Activated CD8-positive, alpha-beta T cell treated with anti-CD3 and anti-CD28 coated beads, Interleukin-2, amount 10 ng/mL, durations not matched to agents 7 days and 5 days (primary cell): ENCODE measurements at regions of chr9 and their contacts with region 1.

Region 1: GRCh38 chr9:128341435-128341849 is 1.1 kb downstream of the SLC27A4 start:
- DNase-seq: peak; percentile 87
- ATAC-seq: peak; percentile 70
- H3K4me3 Mint-ChIP-seq: peak overlapping the region; percentile 95
- H3K27ac Mint-ChIP-seq: peak overlapping the region; percentile 92
- H3K4me1 Mint-ChIP-seq: peaks cover 11% of the 10 kb centered on the region
- H3K27me3 Mint-ChIP-seq: no peaks in the 10 kb centered on the region

Region 2: DNA sequence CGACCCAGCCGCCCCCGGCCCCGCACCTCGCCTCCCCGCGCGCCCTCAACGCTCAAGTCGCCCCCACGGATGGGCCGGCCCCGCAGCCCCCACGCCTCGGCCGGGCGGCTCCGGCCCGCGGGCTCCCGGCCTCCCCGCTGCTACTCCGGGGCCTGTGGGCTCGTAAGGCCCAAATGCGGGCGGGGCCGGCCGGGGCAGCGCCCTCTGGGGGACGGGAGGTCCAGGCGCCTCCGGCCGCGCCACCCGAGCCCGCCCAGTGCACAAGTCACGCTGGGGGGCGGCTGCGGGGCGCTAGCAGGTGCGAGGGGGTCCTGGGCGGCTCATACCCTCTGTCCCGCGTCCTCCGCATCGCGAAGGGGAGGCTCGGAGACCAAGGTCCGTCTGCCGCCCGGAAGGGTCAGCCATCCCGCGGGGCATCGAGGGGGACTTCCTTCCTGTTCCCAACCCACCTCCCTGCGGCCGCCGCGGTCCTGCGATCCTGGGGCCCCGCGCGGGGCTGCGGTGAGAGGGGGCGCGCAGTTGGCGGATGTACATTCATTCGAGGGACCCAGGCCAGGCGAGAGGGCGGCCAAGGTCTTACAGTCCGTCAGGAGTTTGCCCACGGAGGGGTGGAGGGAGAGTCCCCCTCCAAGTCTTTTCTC is 149.9 kb before region 1 on chr9 and contains the start of gene CIZ1:
- CTCF ChIA-PET with region 1: interaction called, 12 read pairs
- POLR2A ChIA-PET with region 1: interaction called, 3 read pairs
- DNase-seq: peak; percentile 78
- ATAC-seq: peak; percentile 89
- H3K4me3 Mint-ChIP-seq: peak within 1 kb of the TSS; percentile 94
- H3K27ac Mint-ChIP-seq: peak within 1 kb of the TSS; percentile 92
- H3K4me1 Mint-ChIP-seq: peaks cover 48% of the 10 kb centered on the region
- H3K27me3 Mint-ChIP-seq: no peaks in the 10 kb centered on the region
- total RNA-seq, gene CIZ1: 121 to 127 TPM

Region 3: DNA sequence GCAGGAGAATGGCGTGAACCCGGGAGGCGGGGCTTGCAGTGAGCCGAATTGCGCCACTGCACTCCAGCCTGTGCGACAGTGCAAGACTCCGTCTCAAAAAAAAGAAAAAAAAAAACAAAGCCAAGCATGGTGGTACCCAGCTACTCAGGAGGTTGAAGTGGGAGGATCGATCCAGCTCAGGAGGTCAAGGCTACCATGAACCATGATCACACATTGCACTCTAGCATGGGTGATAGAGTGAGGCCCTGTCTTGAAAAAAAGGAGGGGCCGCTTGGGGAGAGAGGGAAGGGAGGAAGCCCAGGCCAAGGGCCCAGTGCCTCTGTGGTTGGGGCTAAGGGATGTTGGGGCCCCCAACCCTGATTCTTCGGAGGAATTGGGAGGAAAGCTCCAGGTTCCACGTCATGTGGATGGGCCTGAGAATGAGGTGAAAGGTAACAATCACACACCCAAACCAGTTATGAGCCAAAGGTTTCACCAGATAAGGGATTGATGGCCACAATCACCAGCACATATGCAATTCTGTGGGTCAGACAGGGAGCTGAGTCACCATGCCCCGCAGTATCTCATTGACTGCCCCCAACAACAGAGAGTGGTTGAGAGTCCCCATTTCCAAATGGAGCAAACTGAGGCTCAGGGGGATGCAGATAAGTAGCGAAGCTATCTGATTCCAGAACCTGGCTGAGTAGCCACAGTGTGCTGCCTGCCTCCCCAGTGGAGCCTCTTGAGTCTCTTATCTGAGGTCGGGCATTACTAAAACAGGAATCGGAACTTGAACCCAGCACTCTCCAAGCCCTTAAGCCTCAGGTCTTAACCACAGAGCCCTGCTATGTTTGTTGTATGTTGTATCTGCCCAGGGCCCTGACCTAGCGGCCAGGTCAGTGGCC is 44.9 kb before region 1 on chr9:
- CTCF ChIA-PET with region 1: interaction called, 17 read pairs
- POLR2A ChIA-PET with region 1: interaction called, 3 read pairs
- DNase-seq: no peak
- ATAC-seq: no peak
- H3K4me3 Mint-ChIP-seq: no peak overlapping the region
- H3K27ac Mint-ChIP-seq: no peak overlapping the region
- H3K4me1 Mint-ChIP-seq: peaks cover 4% of the 10 kb centered on the region
- H3K27me3 Mint-ChIP-seq: no peaks in the 10 kb centered on the region

Region 4: GRCh38 chr9:128323212-128323730 is 18.2 kb before region 1 on chr9:
- CTCF ChIA-PET with region 1: interaction called, 15 read pairs
- POLR2A ChIA-PET with region 1: interaction called, 5 read pairs
- DNase-seq: no peak
- ATAC-seq: peak; percentile 3
- H3K4me3 Mint-ChIP-seq: peak overlapping the region; percentile 97
- H3K27ac Mint-ChIP-seq: peak overlapping the region; percentile 99
- H3K4me1 Mint-ChIP-seq: peaks cover 18% of the 10 kb centered on the region
- H3K27me3 Mint-ChIP-seq: no peaks in the 10 kb centered on the region

Region 5: GRCh38 chr9:128399861-128400260 is 58.4 kb after region 1 on chr9:
- CTCF ChIA-PET with region 1: no interaction called
- POLR2A ChIA-PET with region 1: no interaction called
- DNase-seq: no peak
- ATAC-seq: no peak
- H3K4me3 Mint-ChIP-seq: no peak overlapping the region
- H3K27ac Mint-ChIP-seq: no peak overlapping the region
- H3K4me1 Mint-ChIP-seq: peaks cover 3% of the 10 kb centered on the region
- H3K27me3 Mint-ChIP-seq: peaks cover 12% of the 10 kb centered on the region

Region 6: DNA sequence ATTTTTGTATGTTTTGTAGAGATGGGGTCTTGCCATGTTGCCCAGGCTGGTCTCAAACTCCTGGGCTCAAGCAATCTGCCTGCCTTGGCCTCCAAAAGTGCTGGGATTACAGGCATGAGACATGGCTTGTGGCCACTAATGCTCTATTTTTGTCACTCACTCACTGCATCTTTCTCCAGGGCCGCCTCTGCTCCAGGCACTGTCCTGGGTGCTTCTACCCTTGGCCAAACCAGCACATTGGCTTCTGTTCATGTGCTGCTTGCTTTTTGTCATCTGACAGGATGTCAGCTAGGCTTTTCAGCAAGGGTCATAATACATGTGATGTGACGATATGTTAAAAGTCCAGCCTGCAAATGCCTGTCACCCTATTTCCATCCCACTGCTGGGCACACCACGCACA is 117.6 kb after region 1 on chr9:
- CTCF ChIA-PET with region 1: no interaction called
- POLR2A ChIA-PET with region 1: no interaction called
- DNase-seq: no peak
- ATAC-seq: no peak
- H3K4me3 Mint-ChIP-seq: no peak overlapping the region
- H3K27ac Mint-ChIP-seq: peak overlapping the region; percentile 61
- H3K4me1 Mint-ChIP-seq: peaks cover 30% of the 10 kb centered on the region
- H3K27me3 Mint-ChIP-seq: no peaks in the 10 kb centered on the region

Region 7: GRCh38 chr9:128523199-128523925 is 181.9 kb after region 1 on chr9:
- CTCF ChIA-PET with region 1: no interaction called
- POLR2A ChIA-PET with region 1: no interaction called
- DNase-seq: no peak
- ATAC-seq: no peak
- H3K4me3 Mint-ChIP-seq: no peak overlapping the region
- H3K27ac Mint-ChIP-seq: no peak overlapping the region
- H3K4me1 Mint-ChIP-seq: no peaks in the 10 kb centered on the region
- H3K27me3 Mint-ChIP-seq: no peaks in the 10 kb centered on the region

Region 8: DNA sequence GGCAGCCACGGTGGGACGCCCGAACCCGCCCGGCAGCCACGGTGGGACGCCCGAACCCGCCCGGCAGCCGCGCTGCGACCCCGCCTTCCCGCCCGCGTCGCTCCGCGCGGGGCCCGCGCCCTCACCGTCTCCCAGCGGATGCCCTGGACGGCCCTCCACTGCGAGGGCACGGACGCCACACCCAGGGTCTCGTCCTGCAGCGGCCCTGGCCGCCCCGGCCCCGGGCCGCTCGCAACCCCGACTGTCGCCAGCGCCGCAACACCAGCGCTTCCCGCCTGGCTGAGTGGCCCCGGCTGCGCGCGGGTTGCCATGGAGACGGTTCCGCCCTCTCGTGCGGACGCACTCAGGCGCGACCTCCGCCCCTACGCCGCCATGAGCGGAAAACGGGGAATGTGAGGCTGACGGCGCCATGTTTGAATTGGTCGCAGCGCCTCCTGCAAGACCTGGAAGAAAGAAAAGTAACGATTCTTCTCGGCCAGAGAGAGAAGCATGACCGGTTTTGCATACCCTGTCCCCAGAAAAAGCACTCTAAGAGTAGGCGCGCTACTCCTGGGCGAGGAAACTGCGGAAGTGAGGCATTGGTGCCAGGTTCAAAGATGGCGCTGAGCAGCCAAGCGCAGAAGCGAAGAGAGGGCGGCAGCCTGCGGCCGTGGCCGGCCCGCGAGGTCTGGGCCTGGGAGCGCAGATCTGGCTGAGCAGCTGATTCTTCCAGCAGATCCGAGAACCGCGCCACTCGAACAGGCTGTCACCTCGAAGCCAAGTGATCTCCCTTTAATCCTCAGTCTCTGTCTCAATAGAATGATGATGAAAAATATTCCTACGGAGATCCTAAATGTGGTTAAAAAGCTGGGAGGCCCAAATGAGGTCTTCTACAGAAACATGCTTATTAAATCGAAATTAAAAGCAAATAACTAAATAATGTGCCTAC is 315.2 kb after region 1 on chr9 and contains the start of gene DYNC2I2:
- CTCF ChIA-PET with region 1: no interaction called
- POLR2A ChIA-PET with region 1: no interaction called
- DNase-seq: peak; percentile 97
- ATAC-seq: peak; percentile 96
- H3K4me3 Mint-ChIP-seq: peak within 1 kb of the TSS; percentile 84
- H3K27ac Mint-ChIP-seq: peak within 1 kb of the TSS; percentile 99
- H3K4me1 Mint-ChIP-seq: peaks cover 13% of the 10 kb centered on the region
- H3K27me3 Mint-ChIP-seq: no peaks in the 10 kb centered on the region
- total RNA-seq, gene DYNC2I2: 68.9 to 76.3 TPM